CD4-positive, alpha-beta T cell (primary cell): ENCODE measurements at regions of chr1 and their contacts with region 1.

Region 1: DNA sequence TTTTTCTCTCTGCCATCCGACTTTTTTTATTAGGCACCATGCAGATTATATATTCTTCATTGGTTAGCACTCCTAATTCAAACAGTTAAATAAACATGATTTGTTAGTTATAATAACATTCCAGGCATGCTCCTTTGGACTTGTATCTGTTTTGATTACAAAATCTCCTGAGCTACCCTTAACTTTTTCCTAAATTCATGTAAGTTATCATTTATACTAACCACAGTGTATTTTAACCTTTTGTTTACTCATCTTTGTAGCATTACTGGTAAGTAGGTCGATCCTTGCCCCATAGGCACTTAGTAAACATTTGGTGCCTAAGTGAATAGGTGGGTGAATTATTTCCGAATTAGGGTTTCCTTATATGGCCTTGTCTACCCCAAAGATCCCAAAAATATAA is 43.8 kb downstream of the MIER1 start:
- DNase-seq: no peak
- ATAC-seq: no peak
- H3K4me3 ChIP-seq: no peak overlapping the region
- H3K4me3 Mint-ChIP-seq: no peak overlapping the region
- H3K27ac ChIP-seq: no peak overlapping the region
- H3K27ac Mint-ChIP-seq: no peak overlapping the region
- H3K4me1 ChIP-seq: no peaks in the 10 kb centered on the region
- H3K4me1 Mint-ChIP-seq: peaks cover 43% of the 10 kb centered on the region
- H3K27me3 ChIP-seq: no peaks in the 10 kb centered on the region
- H3K27me3 Mint-ChIP-seq: no peaks in the 10 kb centered on the region
- CTCF ChIP-seq: no peak

Region 2: DNA sequence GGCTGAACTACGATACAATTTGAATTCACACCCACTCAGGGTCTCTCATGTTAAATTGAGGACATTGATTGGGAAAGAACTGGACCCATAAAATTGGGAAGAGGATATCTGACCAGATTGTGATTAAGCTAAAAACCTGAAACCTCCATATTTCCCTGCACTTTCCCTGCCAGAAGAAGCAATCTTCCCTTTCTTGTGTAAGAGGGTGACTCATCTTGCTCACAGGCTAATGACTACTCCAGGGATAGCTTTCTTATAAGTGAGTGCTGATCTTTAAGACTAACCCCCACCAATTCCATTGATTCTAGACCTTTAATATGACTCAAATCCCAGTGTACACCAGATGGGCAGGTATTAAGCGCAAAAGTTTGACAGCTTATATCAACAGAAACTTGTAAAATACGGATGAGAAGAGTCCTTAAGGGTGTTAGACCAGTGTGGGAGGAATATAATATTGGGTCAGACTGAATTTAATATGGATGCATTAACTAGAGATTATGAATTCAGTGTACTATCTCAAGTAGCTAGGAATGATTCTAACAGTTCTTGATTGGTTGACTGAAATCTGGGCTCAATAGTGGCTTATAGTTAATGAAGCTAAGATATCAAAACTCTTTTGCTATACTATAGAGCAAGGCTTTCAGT is 446.7 kb before region 1 on chr1:
- CTCF ChIA-PET with region 1: no interaction called
- POLR2A ChIA-PET with region 1: no interaction called
- intact Hi-C with region 1: no loop called
- DNase-seq: no peak
- ATAC-seq: no peak
- H3K4me3 ChIP-seq: no peak overlapping the region
- H3K4me3 Mint-ChIP-seq: no peak overlapping the region
- H3K27ac ChIP-seq: no peak overlapping the region
- H3K27ac Mint-ChIP-seq: no peak overlapping the region
- H3K4me1 ChIP-seq: no peaks in the 10 kb centered on the region
- H3K4me1 Mint-ChIP-seq: no peaks in the 10 kb centered on the region
- H3K27me3 ChIP-seq: no peaks in the 10 kb centered on the region
- H3K27me3 Mint-ChIP-seq: no peaks in the 10 kb centered on the region
- CTCF ChIP-seq: no peak

Region 3: DNA sequence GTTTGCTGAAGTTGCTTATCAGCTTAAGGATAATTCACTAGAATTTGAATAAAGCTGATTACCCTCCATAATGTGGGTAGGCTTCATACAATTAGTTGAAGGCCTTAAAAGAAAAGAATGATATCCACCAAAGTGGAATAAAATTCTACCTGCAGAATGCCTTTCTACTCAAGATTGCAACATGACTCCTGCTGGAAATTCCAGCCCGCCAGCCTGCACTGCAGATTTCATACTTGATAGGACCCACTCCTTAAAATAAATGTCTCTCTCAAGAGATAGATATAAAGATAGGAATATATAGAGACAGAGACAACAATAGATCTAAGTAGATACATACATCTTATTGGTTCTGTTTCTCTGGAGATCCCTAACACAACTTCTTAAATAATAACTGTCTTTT is 143.8 kb before region 1 on chr1:
- CTCF ChIA-PET with region 1: no interaction called
- POLR2A ChIA-PET with region 1: no interaction called
- intact Hi-C with region 1: no loop called
- DNase-seq: no peak
- ATAC-seq: no peak
- H3K4me3 ChIP-seq: no peak overlapping the region
- H3K4me3 Mint-ChIP-seq: no peak overlapping the region
- H3K27ac ChIP-seq: no peak overlapping the region
- H3K27ac Mint-ChIP-seq: no peak overlapping the region
- H3K4me1 ChIP-seq: no peaks in the 10 kb centered on the region
- H3K4me1 Mint-ChIP-seq: no peaks in the 10 kb centered on the region
- H3K27me3 ChIP-seq: no peaks in the 10 kb centered on the region
- H3K27me3 Mint-ChIP-seq: no peaks in the 10 kb centered on the region
- CTCF ChIP-seq: no peak

Region 4: DNA sequence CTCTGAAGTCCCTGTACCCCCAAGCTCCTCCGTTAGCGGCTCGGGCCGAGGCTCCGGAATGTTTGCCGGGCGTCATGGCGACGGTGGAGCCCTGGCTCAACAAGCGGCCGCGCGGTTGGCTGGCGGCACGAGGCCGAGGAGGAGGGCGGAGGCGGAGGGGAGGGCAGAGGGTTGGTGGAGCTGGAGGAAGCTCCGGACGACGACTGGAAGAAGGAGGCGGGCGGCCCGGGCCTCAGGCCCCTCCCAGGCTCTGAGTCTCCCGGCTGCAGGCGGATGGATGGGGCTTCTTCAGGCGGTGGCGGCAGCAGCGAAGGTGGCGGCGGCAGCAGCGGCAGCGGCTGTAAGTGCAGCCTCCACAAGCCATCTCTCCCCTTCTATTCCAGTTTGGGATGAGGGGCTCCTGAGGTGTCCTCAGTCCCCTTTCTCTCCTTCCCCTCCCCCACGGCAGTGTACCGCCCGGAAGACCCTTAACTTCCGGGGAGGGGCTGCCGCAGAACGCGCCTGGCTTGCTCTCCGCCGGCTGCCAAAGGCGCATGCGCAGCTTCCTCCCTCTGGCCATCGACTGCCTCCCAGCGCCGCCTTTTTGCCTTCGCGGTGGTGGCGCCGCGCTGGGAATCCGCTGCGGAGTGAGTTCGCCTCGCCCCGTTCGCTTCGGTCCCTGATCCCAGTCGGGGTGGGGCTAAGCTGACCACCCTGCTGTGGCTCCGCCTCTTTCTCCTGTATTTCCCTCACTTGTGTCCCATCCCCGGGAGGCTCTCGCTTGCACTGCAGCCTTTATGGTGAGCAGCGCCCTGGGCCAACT is 43.6 kb before region 1 on chr1 and contains the starts of genes DNAI4 and MIER1:
- CTCF ChIA-PET with region 1: no interaction called
- POLR2A ChIA-PET with region 1: interaction called, 5 read pairs
- intact Hi-C with region 1: loop called (anchors 5 kb)
- DNase-seq: peak; percentile 90 to 99 (median 95)
- ATAC-seq: peak; percentile 89
- H3K4me3 ChIP-seq: peak within 1 kb of the TSS; percentile 92
- H3K4me3 Mint-ChIP-seq: peak within 1 kb of the TSS; percentile 97
- H3K27ac ChIP-seq: peak within 1 kb of the TSS; percentile 95 to 99
- H3K27ac Mint-ChIP-seq: peak within 1 kb of the TSS; percentile 98
- H3K4me1 ChIP-seq: peaks cover 24% of the 10 kb centered on the region
- H3K4me1 Mint-ChIP-seq: peaks cover 67% of the 10 kb centered on the region
- H3K27me3 ChIP-seq: no peaks in the 10 kb centered on the region
- H3K27me3 Mint-ChIP-seq: no peaks in the 10 kb centered on the region
- CTCF ChIP-seq: no peak
- total RNA-seq, gene DNAI4: 5.0 to 8.8 TPM
- total RNA-seq, gene MIER1: 106 to 107 TPM

Region 5: GRCh38 chr1:66929999-66930822 is 38.4 kb before region 1 on chr1:
- CTCF ChIA-PET with region 1: no interaction called
- POLR2A ChIA-PET with region 1: interaction called, 5 read pairs
- intact Hi-C with region 1: loop called (anchors 5 kb)
- DNase-seq: peak; percentile 88 to 98 (median 94)
- ATAC-seq: peak; percentile 66
- H3K4me3 ChIP-seq: peak overlapping the region; percentile 93
- H3K4me3 Mint-ChIP-seq: peak overlapping the region; percentile 91
- H3K27ac ChIP-seq: peak overlapping the region; percentile 87 to 88
- H3K27ac Mint-ChIP-seq: peak overlapping the region; percentile 84
- H3K4me1 ChIP-seq: peaks cover 18% of the 10 kb centered on the region
- H3K4me1 Mint-ChIP-seq: peaks cover 74% of the 10 kb centered on the region
- H3K27me3 ChIP-seq: no peaks in the 10 kb centered on the region
- H3K27me3 Mint-ChIP-seq: no peaks in the 10 kb centered on the region
- CTCF ChIP-seq: peak; percentile 52

Region 6: GRCh38 chr1:67227196-67227595 is 258.6 kb after region 1 on chr1:
- CTCF ChIA-PET with region 1: no interaction called
- POLR2A ChIA-PET with region 1: no interaction called
- intact Hi-C with region 1: no loop called
- DNase-seq: no peak
- ATAC-seq: no peak
- H3K4me3 ChIP-seq: no peak overlapping the region
- H3K4me3 Mint-ChIP-seq: no peak overlapping the region
- H3K27ac ChIP-seq: no peak overlapping the region
- H3K27ac Mint-ChIP-seq: no peak overlapping the region
- H3K4me1 ChIP-seq: no peaks in the 10 kb centered on the region
- H3K4me1 Mint-ChIP-seq: no peaks in the 10 kb centered on the region
- H3K27me3 ChIP-seq: no peaks in the 10 kb centered on the region
- H3K27me3 Mint-ChIP-seq: no peaks in the 10 kb centered on the region
- CTCF ChIP-seq: no peak